Posterior cingulate gyrus (tissue), 11 donors: ENCODE measurements at regions of chr5 and their contacts with region 1.

Region 1: GRCh38 chr5:142108432-142109330 is at the start of gene NDFIP1:
- DNase-seq: peak; percentile 66 to 97 (median 82)

Region 2: GRCh38 chr5:142063878-142064331 is 44.8 kb before region 1 on chr5:
- intact Hi-C with region 1: loop called (anchors 1 kb)
- DNase-seq: peak; percentile 94 to 99 (median 96)